ENCODE measurements at regions of chr4 and their contacts with region 1.

Region 1: DNA sequence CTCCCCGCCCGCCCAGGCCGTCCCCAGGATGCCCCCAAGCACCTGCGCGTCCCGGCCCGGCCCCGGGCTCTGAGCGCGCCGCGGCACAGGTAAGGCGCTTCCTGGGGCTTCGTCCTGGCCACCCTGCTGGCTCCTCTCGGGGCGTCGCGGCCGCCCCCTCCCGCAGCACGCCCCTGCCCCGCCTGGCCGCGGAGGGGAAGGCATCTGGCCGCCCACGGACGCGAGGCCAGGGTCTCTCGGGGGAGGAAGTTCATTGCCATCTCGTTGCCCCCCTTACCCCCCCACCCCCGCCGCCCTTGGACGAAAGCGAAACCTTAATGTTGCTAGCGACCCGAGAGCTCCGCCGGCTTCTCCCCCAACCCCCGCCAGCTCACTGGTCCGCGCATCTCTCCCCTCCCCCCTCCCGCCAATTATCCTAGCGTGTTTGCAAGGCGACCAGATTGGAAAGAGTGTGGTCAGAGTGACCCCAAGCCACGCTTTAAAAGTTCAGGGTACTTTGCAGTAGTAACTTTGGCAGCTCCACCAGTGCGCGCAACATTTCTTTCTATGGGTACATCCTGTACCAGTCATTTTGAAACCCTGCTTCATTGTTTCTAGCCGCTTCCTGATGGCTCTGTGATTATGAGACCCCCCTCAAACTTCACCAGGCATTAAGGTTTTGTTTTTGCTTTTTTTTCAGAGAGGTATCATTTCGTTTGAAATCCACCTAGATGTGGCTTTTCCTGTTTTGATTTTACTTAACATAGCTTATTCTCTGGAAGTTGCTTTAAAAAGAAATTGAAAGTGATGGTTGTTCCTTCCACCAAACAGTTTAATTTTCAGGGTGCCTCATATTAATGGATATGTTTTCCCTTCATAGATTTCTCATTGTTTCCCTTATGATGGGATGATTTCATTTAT is 626 bp downstream of the TBC1D1 start:
- DNase-seq: no peak
- ATAC-seq: peak; percentile 47
- H3K4me3 Mint-ChIP-seq: peak overlapping the region; percentile 94
- H3K27ac Mint-ChIP-seq: peak overlapping the region; percentile 97
- H3K4me1 Mint-ChIP-seq: peaks cover 57% of the 10 kb centered on the region
- H3K27me3 Mint-ChIP-seq: no peaks in the 10 kb centered on the region
- CTCF ChIP-seq: no peak

Region 2: GRCh38 chr4:36325499-36325898 is 1566.0 kb before region 1 on chr4:
- CTCF ChIA-PET with region 1: no interaction called
- POLR2A ChIA-PET with region 1: no interaction called
- intact Hi-C with region 1: loop called (anchors 10 kb)
- DNase-seq: no peak
- ATAC-seq: peak; percentile 94
- H3K4me3 Mint-ChIP-seq: peak overlapping the region; percentile 64
- H3K27ac Mint-ChIP-seq: peak overlapping the region; percentile 90
- H3K4me1 Mint-ChIP-seq: peaks cover 75% of the 10 kb centered on the region
- H3K27me3 Mint-ChIP-seq: no peaks in the 10 kb centered on the region
- CTCF ChIP-seq: no peak

Region 3: GRCh38 chr4:37749398-37749988 is 142.0 kb before region 1 on chr4:
- CTCF ChIA-PET with region 1: no interaction called
- POLR2A ChIA-PET with region 1: no interaction called
- intact Hi-C with region 1: loop called (anchors 2 kb)
- DNase-seq: no peak
- ATAC-seq: peak; percentile 77
- H3K4me3 Mint-ChIP-seq: peak overlapping the region; percentile 28
- H3K27ac Mint-ChIP-seq: peak overlapping the region; percentile 38
- H3K4me1 Mint-ChIP-seq: peaks cover 40% of the 10 kb centered on the region
- H3K27me3 Mint-ChIP-seq: no peaks in the 10 kb centered on the region
- CTCF ChIP-seq: no peak

Region 4: DNA sequence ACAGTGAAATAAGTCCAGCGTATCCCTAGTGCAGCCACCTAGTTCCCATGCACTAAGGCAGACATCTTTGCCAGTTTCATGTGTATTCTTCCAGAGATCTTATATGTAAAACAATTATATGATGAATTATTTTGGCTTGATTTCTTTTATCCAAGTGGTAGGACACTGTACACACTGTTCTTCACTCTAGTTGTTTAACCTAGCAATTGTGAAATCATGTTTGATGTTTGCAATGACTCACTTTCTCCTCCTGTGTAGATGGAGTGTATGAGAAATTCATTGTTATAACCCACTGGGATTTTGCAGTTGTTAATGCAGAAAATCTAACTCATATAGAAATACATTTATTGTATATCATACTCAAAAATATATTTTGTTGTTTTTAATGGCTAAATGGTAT is 18.1 kb before region 1 on chr4:
- CTCF ChIA-PET with region 1: no interaction called
- POLR2A ChIA-PET with region 1: interaction called, 5 read pairs
- intact Hi-C with region 1: loop called (anchors 2 kb)
- DNase-seq: no peak
- ATAC-seq: no peak
- H3K4me3 Mint-ChIP-seq: no peak overlapping the region
- H3K27ac Mint-ChIP-seq: no peak overlapping the region
- H3K4me1 Mint-ChIP-seq: peaks cover 2% of the 10 kb centered on the region
- H3K27me3 Mint-ChIP-seq: no peaks in the 10 kb centered on the region
- CTCF ChIP-seq: no peak

Region 5: GRCh38 chr4:37994569-37994968 is 103.1 kb after region 1 on chr4:
- CTCF ChIA-PET with region 1: no interaction called
- POLR2A ChIA-PET with region 1: no interaction called
- intact Hi-C with region 1: loop called (anchors 5 kb)
- DNase-seq: no peak
- ATAC-seq: no peak
- H3K4me3 Mint-ChIP-seq: no peak overlapping the region
- H3K27ac Mint-ChIP-seq: peak overlapping the region; percentile 15
- H3K4me1 Mint-ChIP-seq: peaks cover 69% of the 10 kb centered on the region
- H3K27me3 Mint-ChIP-seq: no peaks in the 10 kb centered on the region
- CTCF ChIP-seq: no peak

Region 6: GRCh38 chr4:38489924-38490639 is 598.6 kb after region 1 on chr4:
- CTCF ChIA-PET with region 1: no interaction called
- POLR2A ChIA-PET with region 1: no interaction called
- intact Hi-C with region 1: no loop called
- DNase-seq: no peak
- ATAC-seq: no peak
- H3K4me3 Mint-ChIP-seq: no peak overlapping the region
- H3K27ac Mint-ChIP-seq: no peak overlapping the region
- H3K4me1 Mint-ChIP-seq: no peaks in the 10 kb centered on the region
- H3K27me3 Mint-ChIP-seq: peaks cover 5% of the 10 kb centered on the region
- CTCF ChIP-seq: no peak

Region 7: GRCh38 chr4:39032218-39033085 is 1140.9 kb after region 1 on chr4 and contains the start of gene TMEM156:
- CTCF ChIA-PET with region 1: no interaction called
- POLR2A ChIA-PET with region 1: no interaction called
- intact Hi-C with region 1: loop called (anchors 5 kb)
- DNase-seq: no peak
- ATAC-seq: peak; percentile 69
- H3K4me3 Mint-ChIP-seq: peak within 1 kb of the TSS; percentile 83
- H3K27ac Mint-ChIP-seq: peak within 1 kb of the TSS; percentile 93
- H3K4me1 Mint-ChIP-seq: peaks cover 64% of the 10 kb centered on the region
- H3K27me3 Mint-ChIP-seq: no peaks in the 10 kb centered on the region
- CTCF ChIP-seq: no peak
- total RNA-seq, gene TMEM156: 26.0 and 29.5 TPM in 2 replicates

Measured in activated B cell treated with CpG ODN at 0.5 μM for 24 hours (primary cell).